ENCODE measurements at regions of chr4 and their contacts with region 1.

Region 1: DNA sequence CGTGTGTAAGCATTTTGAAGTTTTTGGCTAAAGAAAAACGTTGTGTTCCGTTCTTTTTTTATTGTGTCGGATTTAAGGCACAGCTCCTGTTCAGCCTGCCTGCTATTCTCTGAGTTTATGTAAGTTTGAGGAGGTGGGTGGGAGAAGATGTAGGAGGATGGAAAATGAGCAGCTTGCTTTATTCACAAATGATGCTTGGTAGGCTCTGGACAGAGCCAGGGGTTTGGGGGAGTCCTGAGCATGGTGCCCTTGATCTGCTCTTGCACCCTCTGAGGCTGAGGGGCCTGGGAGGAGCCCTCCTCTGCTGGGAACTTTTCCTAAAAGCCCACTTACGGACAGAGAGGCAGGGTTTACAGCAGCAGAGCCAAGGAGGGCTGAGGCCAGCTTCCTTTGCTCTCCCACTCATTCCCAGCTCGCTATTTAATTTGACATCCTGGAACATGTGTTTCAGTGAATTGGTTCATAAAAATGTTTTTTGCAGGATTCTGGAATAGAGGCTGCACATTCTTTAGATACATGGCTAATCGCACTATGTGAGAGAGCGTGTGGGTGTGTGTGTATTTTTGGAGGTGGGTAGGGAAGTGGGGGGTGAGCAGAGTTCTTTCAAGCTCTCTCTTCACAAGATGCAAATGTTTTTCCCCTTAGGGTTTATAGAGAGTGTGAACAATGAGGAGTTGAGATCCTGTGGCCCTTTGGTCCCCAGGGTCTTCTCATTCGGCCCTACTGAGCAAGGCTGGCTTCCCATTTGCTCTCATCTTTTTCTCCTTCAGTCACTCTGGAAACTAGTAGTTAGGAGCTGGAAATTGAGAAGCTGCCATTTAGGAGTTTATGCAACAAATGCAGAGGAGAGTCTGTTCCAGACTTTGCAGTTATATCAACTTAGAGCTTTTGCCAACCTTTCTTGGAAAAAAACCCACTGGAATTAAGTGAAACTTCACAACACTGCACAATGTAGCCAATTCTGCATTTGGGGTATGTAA is 32.1 kb downstream of the TMEM131L start:
- DNase-seq: no peak
- H3K4me3 ChIP-seq: no peak overlapping the region
- H3K27ac ChIP-seq: peak overlapping the region; percentile 66
- H3K4me1 ChIP-seq: peaks cover 36% of the 10 kb centered on the region
- H3K27me3 ChIP-seq: no peaks in the 10 kb centered on the region
- CTCF ChIP-seq: no peak

Region 2: GRCh38 chr4:153393397-153393796 is 104.9 kb before region 1 on chr4:
- CTCF ChIA-PET with region 1: interaction called, 15 read pairs
- POLR2A ChIA-PET with region 1: no interaction called
- intact Hi-C with region 1: no loop called
- DNase-seq: no peak
- H3K4me3 ChIP-seq: no peak overlapping the region
- H3K27ac ChIP-seq: no peak overlapping the region
- H3K4me1 ChIP-seq: no peaks in the 10 kb centered on the region
- H3K27me3 ChIP-seq: no peaks in the 10 kb centered on the region
- CTCF ChIP-seq: no peak

Region 3: GRCh38 chr4:153523941-153524386 is 25.7 kb after region 1 on chr4:
- CTCF ChIA-PET with region 1: no interaction called
- POLR2A ChIA-PET with region 1: interaction called, 13 read pairs
- intact Hi-C with region 1: no loop called
- DNase-seq: no peak
- H3K4me3 ChIP-seq: no peak overlapping the region
- H3K27ac ChIP-seq: no peak overlapping the region
- H3K4me1 ChIP-seq: no peaks in the 10 kb centered on the region
- H3K27me3 ChIP-seq: no peaks in the 10 kb centered on the region
- CTCF ChIP-seq: no peak